ENCODE measurements at regions of chr19 and their contacts with region 1.

Region 1: DNA sequence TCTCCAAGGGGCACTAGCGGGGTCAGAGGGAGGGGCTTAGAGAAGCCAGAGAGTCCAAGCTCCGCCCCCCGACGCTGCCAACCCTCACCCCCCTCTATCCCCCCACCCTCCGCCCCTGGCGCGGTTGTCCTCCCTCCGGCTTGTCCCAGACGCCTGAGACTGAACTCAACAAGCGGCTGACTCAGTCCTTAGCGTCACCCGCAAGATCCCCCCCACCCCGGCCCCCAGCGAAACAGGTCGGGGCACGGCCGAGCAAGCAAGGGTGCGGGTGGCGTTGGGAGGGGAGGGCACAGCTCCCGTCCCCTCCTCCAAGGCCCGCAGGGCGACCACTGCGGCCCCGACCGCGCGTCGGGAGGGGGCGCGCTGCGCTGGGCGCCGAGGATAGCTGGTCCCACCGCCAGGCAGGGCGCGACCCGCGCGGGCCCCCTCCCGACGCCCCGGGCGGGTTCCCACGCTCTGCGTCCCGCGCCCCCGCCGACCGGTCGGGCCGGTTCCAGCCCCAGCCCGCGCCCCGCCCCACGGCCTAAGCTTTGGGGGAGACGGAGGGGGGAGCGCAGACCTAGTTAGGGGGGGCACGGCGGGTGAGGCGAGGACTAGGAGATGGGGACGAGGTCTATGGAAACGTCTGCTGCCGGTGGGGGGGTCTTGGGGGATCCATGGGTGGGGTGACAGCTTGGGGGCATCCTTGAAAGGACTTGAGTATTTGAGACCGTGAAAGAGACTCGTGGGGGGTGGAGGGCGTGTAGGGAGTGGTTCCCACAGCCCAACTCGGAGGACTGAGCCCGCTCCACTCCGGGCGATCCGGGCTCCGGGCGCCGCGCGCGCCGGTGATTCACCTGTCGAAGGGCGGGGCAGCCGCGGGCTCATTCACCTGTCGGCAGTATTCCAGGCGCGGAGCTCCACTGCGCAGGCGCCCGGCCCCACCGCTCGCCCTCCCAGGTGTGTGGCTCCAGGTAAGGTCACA is 5.1 kb downstream of the NOTCH3 start:
- DNase-seq: peak; percentile 95 to 98
- H3K4me3 ChIP-seq: peak overlapping the region; percentile 53
- H3K4me3 Mint-ChIP-seq: peak overlapping the region; percentile 69
- H3K27ac Mint-ChIP-seq: peak overlapping the region; percentile 56
- H3K4me1 ChIP-seq: 0 out of 2 replicates have a peak, but pooled peaks cover 6% of the 10 kb centered on the region
- H3K4me1 Mint-ChIP-seq: peaks cover 16% of the 10 kb centered on the region
- H3K27me3 ChIP-seq: no peaks in the 10 kb centered on the region
- H3K27me3 Mint-ChIP-seq: no peaks in the 10 kb centered on the region
- CTCF ChIP-seq: peak; percentile 23 to 47

Region 2: GRCh38 chr19:15125232-15126067 is 70.2 kb before region 1 on chr19:
- CTCF ChIA-PET with region 1: no interaction called
- POLR2A ChIA-PET with region 1: no interaction called
- intact Hi-C with region 1: no loop called
- DNase-seq: peak; percentile 98 to 99
- H3K4me3 ChIP-seq: peak overlapping the region; percentile 99
- H3K4me3 Mint-ChIP-seq: peak overlapping the region; percentile 100
- H3K27ac Mint-ChIP-seq: peak overlapping the region; percentile 100
- H3K4me1 ChIP-seq: 0 out of 2 replicates have a peak, but pooled peaks cover 4% of the 10 kb centered on the region
- H3K4me1 Mint-ChIP-seq: peaks cover 6% of the 10 kb centered on the region
- H3K27me3 ChIP-seq: no peaks in the 10 kb centered on the region
- H3K27me3 Mint-ChIP-seq: no peaks in the 10 kb centered on the region
- CTCF ChIP-seq: no peak

Region 3: DNA sequence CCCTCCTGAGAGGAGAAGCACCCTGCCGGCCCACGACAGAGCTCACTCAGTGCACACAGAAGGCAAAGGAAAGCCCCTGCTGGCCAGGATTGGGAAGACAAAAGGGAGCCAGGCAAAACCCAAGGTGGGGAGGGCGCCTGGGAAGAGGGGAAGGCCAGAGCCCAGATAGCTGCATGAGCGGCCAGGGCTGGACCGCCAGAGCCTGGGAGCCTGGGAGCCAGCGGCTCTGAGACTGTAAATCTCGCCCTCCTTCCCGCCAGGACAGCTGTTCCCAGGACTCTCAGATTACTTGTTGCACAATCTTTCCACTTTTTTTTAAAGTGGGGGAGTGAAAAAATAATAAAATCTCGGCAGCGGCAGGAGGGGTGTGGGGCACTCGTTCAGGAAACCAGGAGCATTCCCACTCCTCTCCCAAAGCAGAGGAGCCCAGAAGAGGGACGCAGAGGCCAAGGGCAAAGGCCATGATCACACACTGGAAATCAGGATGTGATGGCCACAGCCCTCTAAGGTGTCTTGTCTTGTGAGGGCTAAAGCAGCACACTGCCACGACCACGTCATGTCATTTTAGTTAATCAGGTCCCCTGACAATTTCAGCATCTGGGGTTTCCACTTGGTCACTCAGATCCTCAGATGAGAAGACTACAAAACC is 56.2 kb after region 1 on chr19:
- CTCF ChIA-PET with region 1: interaction called, 11 read pairs
- POLR2A ChIA-PET with region 1: no interaction called
- intact Hi-C with region 1: loop called (anchors 5 kb)
- DNase-seq: peak; percentile 53 to 60
- H3K4me3 ChIP-seq: no peak overlapping the region
- H3K4me3 Mint-ChIP-seq: no peak overlapping the region
- H3K27ac Mint-ChIP-seq: no peak overlapping the region
- H3K4me1 ChIP-seq: peaks cover 27% of the 10 kb centered on the region
- H3K4me1 Mint-ChIP-seq: peaks cover 19% of the 10 kb centered on the region
- H3K27me3 ChIP-seq: no peaks in the 10 kb centered on the region
- H3K27me3 Mint-ChIP-seq: no peaks in the 10 kb centered on the region
- CTCF ChIP-seq: peak; percentile 43 to 49

Measured in Caco-2 (cell line).